Activated T-helper 1 cell treated with anti-CD3 and anti-CD28 coated beads, Interleukin-12 subunit alpha, Interleukin-12 subunit beta, Interleukin-2, Interleukin-4 antibody, amounts not matched to agents 30 ng/mL and 10 ng/mL and 1 ng/mL, durations not matched to agents 14 hours and 24 hours and 36 hours (primary cell): ENCODE measurements at regions of chr13 and their contacts with region 1.

Region 1: GRCh38 chr13:48126944-48127830 is 32.3 kb upstream of the MED4 start:
- DNase-seq: peak; percentile 8
- H3K4me3 Mint-ChIP-seq: no peak overlapping the region
- H3K27ac Mint-ChIP-seq: no peak overlapping the region
- H3K4me1 Mint-ChIP-seq: peaks cover 11% of the 10 kb centered on the region
- H3K27me3 Mint-ChIP-seq: peaks cover 7% of the 10 kb centered on the region

Region 2: DNA sequence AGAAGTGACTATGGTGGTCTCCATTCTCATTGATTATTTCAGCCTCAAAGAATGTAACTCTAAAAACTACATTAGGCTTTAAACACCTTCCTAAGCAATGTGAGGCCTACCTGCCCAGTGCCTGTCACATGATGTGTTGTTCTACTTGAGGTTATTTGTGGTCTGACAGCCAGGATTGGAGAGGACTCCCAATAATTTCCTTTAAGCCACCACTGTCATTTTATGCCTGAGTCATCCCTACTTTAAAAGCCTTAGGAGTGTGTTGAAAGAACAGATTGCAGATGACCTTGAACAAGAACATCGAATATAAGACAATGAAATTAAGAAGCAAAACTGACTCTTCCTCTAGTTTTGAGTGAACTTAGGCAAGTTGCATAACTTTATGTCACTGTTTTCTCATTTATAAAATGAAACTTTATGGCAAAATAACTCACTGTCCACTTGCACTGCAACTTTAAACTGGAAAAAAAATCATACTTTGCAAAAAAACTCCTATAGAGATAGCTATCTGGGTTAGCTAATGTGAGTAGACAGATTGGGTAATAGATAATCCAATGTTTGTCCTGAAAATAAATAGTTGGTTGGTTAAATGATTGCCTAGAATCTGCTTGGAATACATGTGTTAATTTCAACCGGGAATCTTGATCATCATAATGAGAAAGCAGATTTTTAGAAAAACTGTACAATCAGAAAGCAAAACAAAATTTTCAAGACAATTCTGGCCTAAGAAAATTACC is 487.3 kb before region 1 on chr13:
- intact Hi-C with region 1: no loop called
- DNase-seq: no peak
- H3K4me3 Mint-ChIP-seq: no peak overlapping the region
- H3K27ac Mint-ChIP-seq: no peak overlapping the region
- H3K4me1 Mint-ChIP-seq: no peaks in the 10 kb centered on the region
- H3K27me3 Mint-ChIP-seq: no peaks in the 10 kb centered on the region

Region 3: GRCh38 chr13:48155848-48156247 is 28.7 kb after region 1 on chr13:
- intact Hi-C with region 1: loop called (anchors 1 kb)
- DNase-seq: peak; percentile 9
- H3K4me3 Mint-ChIP-seq: no peak overlapping the region
- H3K27ac Mint-ChIP-seq: peak overlapping the region; percentile 30
- H3K4me1 Mint-ChIP-seq: peaks cover 73% of the 10 kb centered on the region
- H3K27me3 Mint-ChIP-seq: no peaks in the 10 kb centered on the region

Region 4: GRCh38 chr13:48186722-48187121 is 59.5 kb after region 1 on chr13:
- intact Hi-C with region 1: loop called (anchors 2 kb)
- DNase-seq: no peak
- H3K4me3 Mint-ChIP-seq: no peak overlapping the region
- H3K27ac Mint-ChIP-seq: no peak overlapping the region
- H3K4me1 Mint-ChIP-seq: peaks cover 21% of the 10 kb centered on the region
- H3K27me3 Mint-ChIP-seq: peaks cover 10% of the 10 kb centered on the region

Region 5: DNA sequence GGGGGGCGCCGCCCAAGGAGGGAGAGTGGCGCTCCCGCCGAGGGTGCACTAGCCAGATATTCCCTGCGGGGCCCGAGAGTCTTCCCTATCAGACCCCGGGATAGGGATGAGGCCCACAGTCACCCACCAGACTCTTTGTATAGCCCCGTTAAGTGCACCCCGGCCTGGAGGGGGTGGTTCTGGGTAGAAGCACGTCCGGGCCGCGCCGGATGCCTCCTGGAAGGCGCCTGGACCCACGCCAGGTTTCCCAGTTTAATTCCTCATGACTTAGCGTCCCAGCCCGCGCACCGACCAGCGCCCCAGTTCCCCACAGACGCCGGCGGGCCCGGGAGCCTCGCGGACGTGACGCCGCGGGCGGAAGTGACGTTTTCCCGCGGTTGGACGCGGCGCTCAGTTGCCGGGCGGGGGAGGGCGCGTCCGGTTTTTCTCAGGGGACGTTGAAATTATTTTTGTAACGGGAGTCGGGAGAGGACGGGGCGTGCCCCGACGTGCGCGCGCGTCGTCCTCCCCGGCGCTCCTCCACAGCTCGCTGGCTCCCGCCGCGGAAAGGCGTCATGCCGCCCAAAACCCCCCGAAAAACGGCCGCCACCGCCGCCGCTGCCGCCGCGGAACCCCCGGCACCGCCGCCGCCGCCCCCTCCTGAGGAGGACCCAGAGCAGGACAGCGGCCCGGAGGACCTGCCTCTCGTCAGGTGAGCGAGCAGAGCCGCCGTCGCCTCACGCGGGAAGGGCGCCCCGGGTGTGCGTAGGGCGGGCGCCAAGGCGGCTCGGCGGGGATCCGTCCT is 176.4 kb after region 1 on chr13 and contains the start of gene RB1:
- intact Hi-C with region 1: loop called (anchors 1 kb)
- DNase-seq: peak; percentile 88
- H3K4me3 Mint-ChIP-seq: peak within 1 kb of the TSS; percentile 99
- H3K27ac Mint-ChIP-seq: peak within 1 kb of the TSS; percentile 97
- H3K4me1 Mint-ChIP-seq: peaks cover 30% of the 10 kb centered on the region
- H3K27me3 Mint-ChIP-seq: no peaks in the 10 kb centered on the region
- total RNA-seq, gene RB1: 26.5 and 28.6 TPM in 2 replicates

Region 6: DNA sequence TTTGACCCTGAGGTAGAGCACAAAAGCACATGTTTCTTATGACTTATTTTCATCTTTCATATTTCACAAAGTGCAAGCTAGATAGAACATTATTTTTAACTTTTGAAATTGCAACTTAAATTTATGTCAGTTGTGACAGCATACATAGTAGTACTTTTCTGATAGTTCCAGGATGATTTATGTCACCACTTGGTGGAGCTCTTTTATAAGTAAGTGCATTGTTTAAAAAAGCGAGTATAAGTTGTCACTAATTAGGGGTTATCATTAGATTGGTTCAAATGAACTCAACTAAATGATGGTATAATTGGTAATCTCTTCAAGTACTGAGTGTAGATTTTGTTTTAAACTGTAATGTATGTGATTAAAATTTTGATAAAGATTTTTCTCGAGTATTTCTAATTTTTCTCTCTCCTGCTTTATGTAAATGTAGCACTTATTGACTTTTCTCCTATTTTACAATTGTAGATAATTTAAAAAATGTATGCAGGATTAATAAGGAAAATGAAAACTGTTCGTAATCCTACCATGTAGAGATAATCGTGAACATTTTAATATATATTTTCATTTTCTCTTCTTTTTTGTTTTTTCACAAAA is 207.4 kb after region 1 on chr13:
- intact Hi-C with region 1: loop called (anchors 1 kb)
- DNase-seq: no peak
- H3K4me3 Mint-ChIP-seq: no peak overlapping the region
- H3K27ac Mint-ChIP-seq: no peak overlapping the region
- H3K4me1 Mint-ChIP-seq: peaks cover 13% of the 10 kb centered on the region
- H3K27me3 Mint-ChIP-seq: no peaks in the 10 kb centered on the region

Region 7: GRCh38 chr13:48580185-48580803 is 453.1 kb after region 1 on chr13:
- intact Hi-C with region 1: loop called (anchors 1 kb)
- DNase-seq: peak; percentile 44
- H3K4me3 Mint-ChIP-seq: no peak overlapping the region
- H3K27ac Mint-ChIP-seq: no peak overlapping the region
- H3K4me1 Mint-ChIP-seq: peaks cover 16% of the 10 kb centered on the region
- H3K27me3 Mint-ChIP-seq: peaks cover 63% of the 10 kb centered on the region